K562 (cell line): ENCODE measurements at regions of chr10 and their contacts with region 1.

Region 1: DNA sequence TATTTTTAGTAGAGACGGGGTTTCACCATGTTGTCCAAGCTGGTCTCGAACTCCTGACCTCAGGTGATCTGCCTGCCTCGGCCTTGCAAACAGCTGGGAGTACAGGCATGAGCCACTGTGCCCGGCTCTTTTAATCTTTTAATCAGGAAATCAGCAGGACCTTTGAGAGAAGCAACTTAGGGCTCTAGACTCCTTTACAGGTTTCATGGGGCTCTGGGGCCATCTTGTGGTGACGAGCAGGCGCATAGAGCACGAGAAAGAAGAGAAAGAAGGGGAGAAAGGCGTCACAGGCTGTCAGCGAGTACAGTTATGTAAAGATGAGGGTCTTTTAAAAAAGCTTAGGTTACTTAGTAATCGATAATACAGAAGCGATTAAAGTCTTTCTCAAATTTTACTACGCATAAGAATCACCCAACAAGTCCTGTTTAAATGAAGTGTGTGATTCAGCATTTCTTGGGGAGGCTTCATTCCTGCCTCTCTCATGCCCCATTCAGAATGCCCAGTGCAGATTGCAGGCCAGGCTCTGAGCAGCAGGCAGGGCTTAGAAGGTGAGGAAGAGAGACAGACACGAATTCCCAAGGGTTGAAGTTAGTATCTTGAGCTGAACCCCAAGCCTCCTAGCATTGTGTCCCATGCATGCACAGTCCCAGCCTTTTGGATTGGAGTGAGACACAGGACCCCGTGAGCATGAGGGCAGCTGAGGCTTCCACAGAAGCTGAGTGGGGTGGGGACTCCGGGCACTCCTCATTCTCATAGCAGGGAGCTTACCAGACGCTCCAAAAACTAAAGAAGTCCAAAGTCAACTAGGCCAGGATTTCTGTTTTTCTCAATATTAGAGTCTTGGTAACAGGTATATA is 23.6 kb upstream of the PFKP start:
- DNase-seq: peak; percentile 52 to 82 (median 66)
- ATAC-seq: peak; percentile 84
- H3K4me3 ChIP-seq: no peak overlapping the region
- H3K27ac ChIP-seq: no peak overlapping the region; the same call in 2 of the 3 replicates
- H3K4me1 ChIP-seq: peaks cover 12 to 18% of the 10 kb centered on the region in 2 experiments
- H3K27me3 ChIP-seq: no peaks in the 10 kb centered on the region; a peak in 1 of 5 replicates
- CTCF ChIP-seq: peak; percentile 83 to 94 (median 84)
- EP300 ChIP-seq: no peak
- POLR2A ChIP-seq: no peak
- RAD21 ChIP-seq: peak; percentile 94

Region 2: DNA sequence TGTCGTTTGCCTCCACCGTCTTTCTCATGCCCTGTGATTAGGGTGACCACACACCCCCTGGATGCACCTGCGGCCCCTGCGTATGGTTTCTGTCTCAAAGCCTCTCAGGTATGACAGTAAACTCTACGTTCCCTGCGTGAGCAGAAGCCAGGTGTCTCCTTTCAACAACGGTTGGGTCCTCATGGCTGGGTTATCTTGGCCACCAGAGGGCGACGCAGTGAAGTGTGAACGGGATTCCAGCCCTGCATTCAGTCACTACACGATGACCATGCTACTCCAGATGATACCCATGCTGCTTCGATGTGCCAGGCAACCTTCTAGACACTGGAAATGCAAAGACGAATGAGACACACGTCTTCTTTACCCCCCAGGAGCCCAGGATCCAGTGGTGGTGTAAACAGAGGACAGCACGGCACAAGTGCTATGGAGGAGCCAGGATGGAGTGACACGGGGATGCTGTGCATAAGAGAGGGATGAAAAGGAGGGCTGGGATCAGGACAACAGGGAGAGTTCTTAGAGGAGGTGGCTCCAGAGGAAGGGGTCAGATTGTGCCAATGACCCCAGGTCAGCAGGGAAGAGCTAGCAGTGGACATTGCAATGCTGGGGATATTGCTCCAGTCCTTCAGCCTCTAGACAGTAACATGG is 204.5 kb before region 1 on chr10:
- CTCF ChIA-PET with region 1: interaction called, 4 read pairs
- POLR2A ChIA-PET with region 1: no interaction called
- in situ Hi-C with region 1: no loop called
- intact Hi-C with region 1: loop called (anchors 1 kb)
- DNase-seq: peak; percentile 41 to 63 (median 51)
- ATAC-seq: peak; percentile 93
- H3K4me3 ChIP-seq: no peak overlapping the region
- H3K27ac ChIP-seq: no peak overlapping the region
- H3K4me1 ChIP-seq: no peaks in the 10 kb centered on the region
- H3K27me3 ChIP-seq: peaks cover 13 to 22% of the 10 kb centered on the region in 2 experiments
- CTCF ChIP-seq: peak; percentile 65 to 78 (median 71)
- EP300 ChIP-seq: no peak
- POLR2A ChIP-seq: no peak
- RAD21 ChIP-seq: peak in 1 of 2 experiments; percentile 54; a peak in 2 of 4 replicates

Region 3: GRCh38 chr10:2927958-2928840 is 115.5 kb before region 1 on chr10:
- CTCF ChIA-PET with region 1: interaction called, 12 read pairs
- POLR2A ChIA-PET with region 1: no interaction called
- in situ Hi-C with region 1: loop called (anchors 5 kb)
- intact Hi-C with region 1: loop called (anchors 1 kb)
- DNase-seq: peak; percentile 75 to 81 (median 77)
- ATAC-seq: peak; percentile 95
- H3K4me3 ChIP-seq: no peak overlapping the region
- H3K27ac ChIP-seq: no peak overlapping the region
- H3K4me1 ChIP-seq: no peaks in the 10 kb centered on the region
- H3K27me3 ChIP-seq: peaks cover 22 to 49% of the 10 kb centered on the region in 2 experiments; a peak in 4 of 5 replicates
- CTCF ChIP-seq: peak; percentile 74 to 82 (median 77)
- EP300 ChIP-seq: no peak
- POLR2A ChIP-seq: no peak
- RAD21 ChIP-seq: peak; percentile 54 to 79